ENCODE measurements at regions of chr6 and their contacts with region 1.

Region 1: DNA sequence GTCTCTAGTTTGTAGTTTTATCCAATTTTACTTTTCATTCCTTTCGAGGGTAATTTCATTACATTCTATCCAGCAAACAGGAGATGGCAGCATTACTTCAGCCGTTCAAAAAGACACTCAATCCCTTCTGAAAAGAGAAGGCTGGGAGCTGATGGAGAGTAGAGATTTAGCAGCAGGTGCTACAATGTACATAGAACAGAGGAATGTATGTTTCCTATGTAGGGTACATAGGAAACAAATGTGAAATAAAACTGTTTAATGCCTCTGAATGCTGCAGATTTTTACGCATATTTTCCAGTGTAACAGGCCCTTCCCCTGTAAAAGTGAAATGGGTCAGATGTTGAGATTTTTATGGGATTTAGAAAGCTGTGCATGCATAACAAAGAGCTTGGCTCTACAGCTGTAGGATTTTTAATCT is 16.0 kb downstream of the RPS12 start:
- DNase-seq: no peak
- ATAC-seq: peak; percentile 76; the same call in 1 of the 2 replicates
- H3K4me3 ChIP-seq: no peak overlapping the region
- H3K27ac ChIP-seq: no peak overlapping the region
- H3K4me1 ChIP-seq: no peaks in the 10 kb centered on the region
- H3K27me3 ChIP-seq: no peaks in the 10 kb centered on the region
- CTCF ChIP-seq: peak; percentile 56; the same call in 1 of the 2 replicates

Region 2: DNA sequence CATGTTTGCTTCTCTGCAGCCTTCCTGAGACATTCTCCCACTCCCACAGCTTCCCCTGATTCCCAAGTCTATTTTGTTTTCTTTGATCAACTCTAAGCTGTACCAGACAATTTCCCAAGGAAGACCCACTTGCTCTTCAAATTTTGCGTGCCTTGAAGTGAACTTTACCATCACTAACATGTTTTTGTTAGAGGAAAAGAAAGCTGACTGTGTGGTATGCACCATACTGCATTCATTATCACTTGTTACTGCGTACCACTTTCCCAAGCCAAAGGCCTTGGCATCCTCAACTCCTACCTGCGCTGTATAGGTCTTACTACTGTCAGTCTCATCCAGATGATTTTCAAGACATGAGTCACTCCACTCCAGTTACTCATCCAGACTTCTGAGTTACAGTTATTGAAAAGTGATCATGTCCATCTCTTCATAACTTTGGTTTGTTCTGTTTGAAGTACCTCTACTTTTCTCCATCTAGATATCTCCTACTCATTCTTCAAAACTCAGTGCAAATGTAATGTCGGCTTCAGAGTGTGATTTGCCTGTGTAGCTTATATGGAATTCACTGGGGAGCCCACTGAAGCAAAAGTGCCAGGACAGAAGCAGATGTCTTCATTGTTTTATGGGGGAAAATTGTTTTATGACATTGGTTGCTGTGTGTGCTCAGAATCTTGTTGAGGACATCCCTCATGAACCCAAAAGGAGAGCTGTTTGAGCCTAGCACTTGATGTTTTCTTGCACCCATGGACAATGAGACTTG is 10.8 kb before region 1 on chr6:
- CTCF ChIA-PET with region 1: no interaction called
- POLR2A ChIA-PET with region 1: no interaction called
- in situ Hi-C with region 1: no loop called
- intact Hi-C with region 1: no loop called
- DNase-seq: no peak
- ATAC-seq: peak; percentile 42; the same call in 1 of the 2 replicates
- H3K4me3 ChIP-seq: no peak overlapping the region
- H3K27ac ChIP-seq: no peak overlapping the region
- H3K4me1 ChIP-seq: peaks cover 36% of the 10 kb centered on the region
- H3K27me3 ChIP-seq: no peaks in the 10 kb centered on the region
- CTCF ChIP-seq: no peak

Region 3: GRCh38 chr6:132962936-132963868 is 132.9 kb after region 1 on chr6:
- CTCF ChIA-PET with region 1: no interaction called
- POLR2A ChIA-PET with region 1: no interaction called
- in situ Hi-C with region 1: no loop called
- intact Hi-C with region 1: loop called (anchors 5 kb)
- DNase-seq: peak; percentile 24
- ATAC-seq: peak; percentile 92
- H3K4me3 ChIP-seq: no peak overlapping the region
- H3K27ac ChIP-seq: no peak overlapping the region
- H3K4me1 ChIP-seq: no peaks in the 10 kb centered on the region
- H3K27me3 ChIP-seq: no peaks in the 10 kb centered on the region
- CTCF ChIP-seq: peak; percentile 84

Region 4: GRCh38 chr6:133198725-133199124 is 368.4 kb after region 1 on chr6:
- CTCF ChIA-PET with region 1: no interaction called
- POLR2A ChIA-PET with region 1: no interaction called
- in situ Hi-C with region 1: no loop called
- intact Hi-C with region 1: loop called (anchors 10 kb)
- DNase-seq: no peak
- ATAC-seq: no peak
- H3K4me3 ChIP-seq: no peak overlapping the region
- H3K27ac ChIP-seq: no peak overlapping the region
- H3K4me1 ChIP-seq: no peaks in the 10 kb centered on the region
- H3K27me3 ChIP-seq: no peaks in the 10 kb centered on the region
- CTCF ChIP-seq: no peak

Region 5: DNA sequence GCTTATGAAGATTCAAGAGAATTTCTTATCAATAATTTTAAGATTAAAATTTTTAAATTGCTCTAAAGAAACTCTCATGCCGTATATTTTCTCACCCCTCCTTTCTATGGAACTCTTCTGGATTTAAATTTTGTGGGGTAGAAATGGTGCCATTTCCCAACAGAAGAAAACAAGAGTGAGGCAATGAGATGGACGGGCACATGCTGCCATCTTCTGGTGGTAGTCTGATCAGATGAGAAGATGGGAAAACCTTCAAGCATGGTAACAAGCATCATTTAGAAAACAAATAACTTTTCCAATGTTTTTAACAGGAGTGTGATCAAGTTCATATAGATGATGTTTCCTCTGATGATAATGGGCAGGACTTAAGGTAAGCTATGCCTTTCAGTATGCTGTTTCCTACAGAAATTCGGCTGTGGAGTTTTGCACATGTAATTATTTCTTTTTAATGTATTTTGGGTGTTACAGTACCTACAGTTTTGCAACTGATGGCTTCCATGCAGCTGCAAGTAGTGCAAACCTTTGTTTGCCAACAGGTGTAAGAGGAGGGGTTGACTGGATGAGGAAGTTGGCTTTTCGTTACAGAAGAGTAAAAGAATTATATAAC is 682.2 kb after region 1 on chr6:
- CTCF ChIA-PET with region 1: no interaction called
- POLR2A ChIA-PET with region 1: no interaction called
- in situ Hi-C with region 1: no loop called
- intact Hi-C with region 1: loop called (anchors 2 kb)
- DNase-seq: peak; percentile 33
- ATAC-seq: peak; percentile 83
- H3K4me3 ChIP-seq: no peak overlapping the region
- H3K27ac ChIP-seq: no peak overlapping the region
- H3K4me1 ChIP-seq: no peaks in the 10 kb centered on the region
- H3K27me3 ChIP-seq: no peaks in the 10 kb centered on the region; the same call in 1 of the 2 replicates
- CTCF ChIP-seq: peak; percentile 70

Region 6: GRCh38 chr6:133553652-133554051 is 723.3 kb after region 1 on chr6:
- CTCF ChIA-PET with region 1: no interaction called
- POLR2A ChIA-PET with region 1: no interaction called
- in situ Hi-C with region 1: no loop called
- intact Hi-C with region 1: loop called (anchors 2 kb)
- DNase-seq: no peak
- ATAC-seq: peak; percentile 84
- H3K4me3 ChIP-seq: no peak overlapping the region
- H3K27ac ChIP-seq: no peak overlapping the region
- H3K4me1 ChIP-seq: no peaks in the 10 kb centered on the region
- H3K27me3 ChIP-seq: no peaks in the 10 kb centered on the region
- CTCF ChIP-seq: peak; percentile 69

Measured in Panc1 (cell line).